ENCODE measurements at regions of chr12 and their contacts with region 1.

Region 1: GRCh38 chr12:5745265-5745888 is 199.7 kb downstream of the ANO2 start:
- DNase-seq: peak; percentile 20
- H3K4me3 ChIP-seq: no peak overlapping the region
- H3K27ac ChIP-seq: no peak overlapping the region
- H3K27me3 ChIP-seq: peaks cover 3% of the 10 kb centered on the region
- CTCF ChIP-seq: peak; percentile 81

Region 2: GRCh38 chr12:5733136-5733755 is 12.1 kb before region 1 on chr12:
- CTCF ChIA-PET with region 1: interaction called, 12 read pairs
- POLR2A ChIA-PET with region 1: no interaction called
- DNase-seq: no peak
- H3K4me3 ChIP-seq: no peak overlapping the region
- H3K27ac ChIP-seq: no peak overlapping the region
- H3K27me3 ChIP-seq: peaks cover 2% of the 10 kb centered on the region
- CTCF ChIP-seq: no peak

Region 3: DNA sequence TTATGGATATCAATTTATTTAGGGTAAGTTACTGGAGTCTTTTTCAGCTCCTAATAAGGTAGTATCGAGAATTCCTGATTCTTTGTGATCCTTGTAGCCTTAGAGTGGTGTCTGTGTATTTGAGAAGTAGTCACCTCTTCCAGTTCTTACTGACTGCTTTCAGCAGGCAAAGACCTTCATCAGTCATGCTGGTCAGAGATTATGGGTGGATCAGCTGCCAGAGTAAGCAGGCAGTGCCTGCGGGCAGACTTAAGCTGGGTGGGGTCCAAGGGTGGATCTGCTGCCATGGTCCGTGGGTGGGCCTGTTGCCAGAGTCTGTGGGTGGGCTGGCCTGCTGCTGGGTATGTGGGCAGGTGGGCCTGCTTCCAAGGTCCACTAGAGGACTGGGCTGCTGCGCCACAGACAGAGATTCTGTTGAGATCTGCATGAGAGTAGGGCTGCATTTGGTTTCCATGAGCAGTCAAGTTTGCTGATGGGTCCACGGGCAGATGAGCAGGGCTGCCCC is 11.0 kb after region 1 on chr12:
- CTCF ChIA-PET with region 1: interaction called, 10 read pairs
- POLR2A ChIA-PET with region 1: no interaction called
- DNase-seq: no peak
- H3K4me3 ChIP-seq: no peak overlapping the region
- H3K27ac ChIP-seq: no peak overlapping the region
- H3K27me3 ChIP-seq: no peaks in the 10 kb centered on the region
- CTCF ChIP-seq: no peak

Region 4: DNA sequence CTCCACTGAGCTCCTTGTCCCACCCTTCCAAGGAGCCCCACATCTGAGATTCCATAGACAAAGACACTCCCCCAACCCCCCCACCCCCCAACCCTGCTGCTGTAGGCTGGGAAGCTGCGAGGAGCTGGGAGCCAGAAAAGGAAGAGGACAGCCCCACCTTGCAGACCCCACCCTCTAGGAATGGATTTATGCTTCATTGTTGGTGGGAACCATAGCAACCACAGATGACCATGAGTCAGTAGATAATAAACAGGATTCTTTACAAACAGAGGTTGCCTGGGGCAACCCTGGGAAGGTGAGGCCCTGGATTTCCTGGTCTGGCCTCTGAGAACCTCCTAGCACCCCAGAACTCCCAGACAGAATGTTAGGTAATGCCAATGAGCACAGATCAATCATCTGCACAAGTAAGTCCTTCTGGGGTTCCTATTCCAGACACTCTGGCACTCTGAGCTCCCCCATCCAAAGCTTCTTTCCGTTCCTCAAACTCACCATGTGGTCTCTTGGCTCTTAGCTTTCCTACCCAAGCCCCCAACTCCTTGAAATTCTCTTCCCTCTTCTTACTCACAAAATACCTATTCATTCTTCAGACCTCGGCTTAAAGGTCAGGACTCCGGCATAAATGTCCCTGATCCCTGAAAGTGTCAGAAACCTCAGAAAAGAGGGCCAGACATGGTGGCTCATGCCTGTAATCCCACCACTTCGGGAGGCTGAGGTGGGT is 549.9 kb after region 1 on chr12:
- CTCF ChIA-PET with region 1: no interaction called
- POLR2A ChIA-PET with region 1: no interaction called
- DNase-seq: peak; percentile 32
- H3K4me3 ChIP-seq: no peak overlapping the region
- H3K27ac ChIP-seq: no peak overlapping the region
- H3K27me3 ChIP-seq: no peaks in the 10 kb centered on the region
- CTCF ChIP-seq: no peak